ENCODE measurements at regions of chr12 and their contacts with region 1.

Region 1: GRCh38 chr12:122051231-122051876 is 27.2 kb upstream of the MLXIP start:
- DNase-seq: no peak
- H3K4me3 ChIP-seq: no peak overlapping the region
- H3K27ac ChIP-seq: no peak overlapping the region
- H3K4me1 ChIP-seq: no peaks in the 10 kb centered on the region
- H3K27me3 ChIP-seq: no peaks in the 10 kb centered on the region
- CTCF ChIP-seq: no peak

Region 2: DNA sequence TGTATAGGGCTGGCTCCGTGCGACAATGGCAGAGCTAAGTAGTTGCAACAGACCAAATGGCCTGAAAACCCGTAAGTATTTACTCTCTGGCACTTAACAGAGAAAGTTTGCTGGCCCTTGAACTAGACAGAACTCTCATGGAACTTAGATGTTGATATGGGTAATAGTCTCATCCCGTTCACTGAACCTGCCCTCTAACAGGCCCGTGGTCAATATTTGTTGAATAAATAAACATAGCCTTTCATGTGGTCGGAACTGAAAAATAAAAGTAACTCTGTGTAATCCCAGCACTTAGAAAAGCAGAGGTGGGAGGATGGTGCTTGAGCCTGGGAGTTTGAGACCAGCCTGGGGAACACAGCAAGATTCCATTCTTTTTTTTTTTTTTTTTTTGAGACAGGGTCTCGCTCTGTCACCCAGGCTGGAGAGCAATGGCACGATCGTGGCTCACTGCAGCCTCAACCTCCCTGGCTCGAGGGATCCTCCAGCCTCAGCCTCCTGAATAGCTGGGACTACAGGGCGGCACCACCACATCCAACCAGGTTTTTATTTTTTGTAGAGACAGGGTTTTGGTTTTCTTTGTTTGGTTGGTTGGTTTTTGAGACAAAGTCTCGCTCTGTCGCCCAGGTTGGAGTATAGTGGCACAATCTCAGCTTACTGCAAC is 500.2 kb before region 1 on chr12:
- intact Hi-C with region 1: no loop called
- DNase-seq: no peak
- H3K4me3 ChIP-seq: no peak overlapping the region
- H3K27ac ChIP-seq: no peak overlapping the region
- H3K4me1 ChIP-seq: no peaks in the 10 kb centered on the region
- H3K27me3 ChIP-seq: no peaks in the 10 kb centered on the region
- CTCF ChIP-seq: no peak

Region 3: GRCh38 chr12:122123051-122123760 is 71.9 kb after region 1 on chr12:
- intact Hi-C with region 1: loop called (anchors 2 kb)
- DNase-seq: peak; percentile 91
- H3K4me3 ChIP-seq: no peak overlapping the region
- H3K27ac ChIP-seq: peak overlapping the region; percentile 35
- H3K4me1 ChIP-seq: peaks cover 11% of the 10 kb centered on the region
- H3K27me3 ChIP-seq: no peaks in the 10 kb centered on the region
- CTCF ChIP-seq: peak; percentile 64

Measured in colonic mucosa (tissue), 4 donors.